Heart left ventricle (tissue), 16 donors: ENCODE measurements at regions of chrX and their contacts with region 1.

Region 1: GRCh38 chrX:119516157-119516702 is 48.0 kb downstream of the SLC25A5 start:
- DNase-seq: peak in 2 of 5 donors; percentile 16 to 18
- ATAC-seq: peak in 3 of 4 donors; percentile 66 to 76 (median 73)
- H3K4me3 ChIP-seq: no peak overlapping the region
- H3K27ac ChIP-seq: no peak overlapping the region
- H3K4me1 ChIP-seq: peaks cover 0 to 5% (median 0%) of the 10 kb centered on the region in 12 donors
- H3K27me3 ChIP-seq: no peaks in the 10 kb centered on the region
- CTCF ChIP-seq: peak; percentile 58 to 73 (median 66)
- POLR2A ChIP-seq: no peak

Region 2: GRCh38 chrX:118839334-118839958 is 676.8 kb before region 1 on chrX:
- intact Hi-C with region 1: no loop called
- DNase-seq: peak; percentile 77 to 90 (median 84)
- ATAC-seq: peak; percentile 87 to 96 (median 95)
- H3K4me3 ChIP-seq: peak overlapping the region in 11 of 12 donors; percentile 16 to 74 (median 56)
- H3K27ac ChIP-seq: peak overlapping the region in 2 of 12 donors; percentile 4 to 29
- H3K4me1 ChIP-seq: peaks cover 0 to 7% (median 0%) of the 10 kb centered on the region in 12 donors
- H3K27me3 ChIP-seq: peaks cover 0 to 16% (median 0%) of the 10 kb centered on the region in 9 donors
- CTCF ChIP-seq: peak; percentile 60 to 87 (median 74)
- POLR2A ChIP-seq: no peak

Region 3: GRCh38 chrX:119410027-119410823 is 106.0 kb before region 1 on chrX:
- intact Hi-C with region 1: loop called in 4 of 10 experiments (anchors 5 to 10 kb)
- DNase-seq: peak in 1 of 5 donors; percentile 16
- ATAC-seq: no peak
- H3K4me3 ChIP-seq: no peak overlapping the region
- H3K27ac ChIP-seq: no peak overlapping the region
- H3K4me1 ChIP-seq: no peaks in the 10 kb centered on the region
- H3K27me3 ChIP-seq: peaks cover 0 to 3% (median 0%) of the 10 kb centered on the region in 9 donors
- CTCF ChIP-seq: no peak
- POLR2A ChIP-seq: no peak

Region 4: DNA sequence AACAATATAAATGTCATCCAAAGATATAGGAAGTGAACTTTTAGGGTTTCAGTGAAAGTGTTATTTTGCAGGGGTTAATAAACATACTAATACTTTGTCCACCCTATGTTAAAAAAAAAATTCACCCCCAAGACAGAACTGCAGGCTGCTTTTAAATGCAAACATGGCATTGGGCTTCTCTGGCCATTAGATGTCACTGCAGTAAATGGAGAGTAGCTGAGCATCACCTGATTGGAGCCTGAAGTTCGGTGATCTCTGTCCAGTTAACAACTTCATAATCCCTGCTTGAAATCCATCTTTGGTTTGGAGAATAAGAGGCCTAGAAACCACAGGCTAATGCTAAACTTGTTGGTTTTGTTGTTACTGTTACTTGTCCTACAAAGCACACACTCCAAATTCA is 98.4 kb before region 1 on chrX:
- intact Hi-C with region 1: loop called in 6 of 10 experiments (anchors 2 to 10 kb)
- DNase-seq: no peak
- ATAC-seq: no peak
- H3K4me3 ChIP-seq: no peak overlapping the region
- H3K27ac ChIP-seq: no peak overlapping the region
- H3K4me1 ChIP-seq: no peaks in the 10 kb centered on the region
- H3K27me3 ChIP-seq: no peaks in the 10 kb centered on the region
- CTCF ChIP-seq: peak in 7 of 12 donors; percentile 7 to 33 (median 20)
- POLR2A ChIP-seq: no peak

Region 5: GRCh38 chrX:119468930-119469635 is 47.1 kb before region 1 on chrX:
- intact Hi-C with region 1: loop called in 1 of 10 experiments (anchors 1 kb)
- DNase-seq: peak; percentile 87 to 93 (median 89)
- ATAC-seq: peak; percentile 77 to 89 (median 87)
- H3K4me3 ChIP-seq: peak overlapping the region; percentile 73 to 100 (median 85)
- H3K27ac ChIP-seq: peak overlapping the region; percentile 91 to 99 (median 97)
- H3K4me1 ChIP-seq: peaks cover 0 to 16% (median 0%) of the 10 kb centered on the region in 12 donors
- H3K27me3 ChIP-seq: no peaks in the 10 kb centered on the region
- CTCF ChIP-seq: peak; percentile 56 to 88 (median 74)
- POLR2A ChIP-seq: peak in 1 of 2 donors; percentile 52

Region 6: DNA sequence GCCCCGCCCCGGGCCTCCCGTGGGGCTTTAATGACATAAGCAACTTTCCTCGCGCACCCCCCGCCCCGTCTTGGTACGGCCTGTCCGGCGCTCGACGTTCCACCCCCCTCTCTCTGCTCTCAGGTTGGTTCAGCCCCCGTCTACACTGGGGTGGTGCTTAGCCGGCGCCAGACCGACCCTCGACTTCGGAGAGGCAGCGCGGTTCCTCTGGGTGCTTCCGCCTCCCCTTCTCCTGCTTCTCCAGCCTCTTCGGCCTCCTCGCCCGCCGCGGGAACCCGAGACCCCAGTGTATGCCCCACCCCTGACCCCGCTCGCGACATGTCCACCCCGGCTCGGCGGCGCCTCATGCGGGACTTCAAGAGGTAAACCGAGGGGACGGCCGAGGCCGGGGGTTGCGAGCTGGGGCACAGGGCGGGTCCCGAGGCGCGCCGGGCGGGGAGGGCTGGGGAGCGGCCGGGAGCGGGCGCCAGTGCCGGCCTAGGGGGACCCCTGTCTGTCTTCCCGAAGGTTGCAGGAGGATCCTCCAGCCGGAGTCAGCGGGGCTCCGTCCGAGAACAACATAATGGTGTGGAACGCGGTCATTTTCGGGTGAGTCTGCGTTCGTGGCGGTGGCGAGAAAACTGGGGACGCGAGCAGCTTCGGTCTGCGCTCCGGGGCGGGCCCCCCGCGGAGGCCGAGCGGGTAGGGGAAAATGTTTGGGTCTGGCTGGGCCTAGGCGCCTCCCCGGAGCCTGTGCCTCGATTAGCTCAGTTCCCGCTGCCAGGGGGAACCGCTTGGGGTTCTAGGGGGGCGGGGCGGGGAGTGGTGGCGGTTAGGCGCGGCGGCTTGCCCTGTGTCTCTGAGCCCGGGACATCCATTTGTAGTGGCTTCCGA is 58.4 kb after region 1 on chrX and contains the start of gene UBE2A:
- intact Hi-C with region 1: loop called in 1 of 10 experiments (anchors 10 kb)
- DNase-seq: peak; percentile 92 to 95 (median 92)
- ATAC-seq: peak; percentile 94 to 98 (median 96)
- H3K4me3 ChIP-seq: peak within 1 kb of the TSS; percentile 39 to 88 (median 79)
- H3K27ac ChIP-seq: peak within 1 kb of the TSS; percentile 89 to 96 (median 93)
- H3K4me1 ChIP-seq: peaks cover 0 to 22% (median 8%) of the 10 kb centered on the region in 12 donors
- H3K27me3 ChIP-seq: peaks cover 0 to 7% (median 0%) of the 10 kb centered on the region in 9 donors
- CTCF ChIP-seq: peak; percentile 15 to 61 (median 40)
- POLR2A ChIP-seq: peak; percentile 2 to 82
- total RNA-seq, gene UBE2A: 37.3 to 72.4 (median 65.5) TPM

Region 7: DNA sequence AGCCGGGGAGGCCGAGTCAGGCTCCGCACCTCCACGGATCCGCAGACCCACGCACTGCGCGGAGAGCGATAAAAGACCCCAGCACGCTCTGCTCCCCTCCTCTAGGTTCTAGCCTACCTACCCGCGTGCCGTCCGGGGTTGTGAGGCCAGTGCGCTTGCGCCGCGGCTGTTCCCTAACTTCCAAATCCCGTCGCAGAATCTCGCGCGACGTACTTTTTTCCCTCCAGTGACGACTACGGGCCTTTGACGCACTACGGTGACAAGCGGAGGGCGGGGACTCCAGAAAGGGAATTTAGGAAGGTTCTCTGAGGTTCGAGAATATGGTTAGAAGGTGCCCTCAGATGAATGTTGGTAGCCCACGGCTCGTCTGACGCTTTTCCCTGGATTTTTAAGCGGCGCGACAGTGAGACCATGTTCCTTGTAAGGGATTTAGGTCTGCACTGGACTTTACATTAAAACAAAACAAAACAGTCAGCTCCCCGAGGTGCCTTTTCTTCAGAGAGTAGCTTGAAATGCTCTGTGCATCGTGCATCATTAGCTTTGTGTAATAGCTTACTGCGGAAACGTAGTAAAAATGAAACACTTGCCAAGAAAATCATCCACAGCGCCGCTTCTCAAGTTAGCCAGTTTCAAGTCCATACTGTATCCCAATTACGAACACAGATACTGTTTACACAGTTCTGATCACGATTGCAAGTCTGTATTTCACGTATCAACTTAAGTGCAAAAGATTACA is 90.2 kb after region 1 on chrX and contains the start of gene NKRF:
- intact Hi-C with region 1: loop called in 2 of 10 experiments (anchors 5 to 10 kb)
- DNase-seq: peak; percentile 91 to 96 (median 93)
- ATAC-seq: peak; percentile 86 to 96 (median 94)
- H3K4me3 ChIP-seq: peak within 1 kb of the TSS; percentile 55 to 98 (median 76)
- H3K27ac ChIP-seq: peak within 1 kb of the TSS; percentile 65 to 97 (median 88)
- H3K4me1 ChIP-seq: peaks cover 0 to 7% (median 0%) of the 10 kb centered on the region in 12 donors
- H3K27me3 ChIP-seq: peaks cover 0 to 9% (median 0%) of the 10 kb centered on the region in 9 donors
- CTCF ChIP-seq: no peak
- POLR2A ChIP-seq: peak in 1 of 2 donors; percentile 80
- total RNA-seq, gene NKRF: 3.9 to 6.0 (median 4.8) TPM

Region 8: GRCh38 chrX:119729408-119730201 is 213.4 kb after region 1 on chrX:
- intact Hi-C with region 1: loop called in 9 of 10 experiments (anchors 2 to 10 kb)
- DNase-seq: peak in 4 of 5 donors; percentile 39 to 59 (median 42)
- ATAC-seq: peak in 3 of 4 donors; percentile 30 to 58 (median 49)
- H3K4me3 ChIP-seq: no peak overlapping the region
- H3K27ac ChIP-seq: no peak overlapping the region
- H3K4me1 ChIP-seq: peaks cover 0 to 8% (median 0%) of the 10 kb centered on the region in 12 donors
- H3K27me3 ChIP-seq: no peaks in the 10 kb centered on the region
- CTCF ChIP-seq: peak; percentile 41 to 69 (median 58)
- POLR2A ChIP-seq: no peak

Region 9: DNA sequence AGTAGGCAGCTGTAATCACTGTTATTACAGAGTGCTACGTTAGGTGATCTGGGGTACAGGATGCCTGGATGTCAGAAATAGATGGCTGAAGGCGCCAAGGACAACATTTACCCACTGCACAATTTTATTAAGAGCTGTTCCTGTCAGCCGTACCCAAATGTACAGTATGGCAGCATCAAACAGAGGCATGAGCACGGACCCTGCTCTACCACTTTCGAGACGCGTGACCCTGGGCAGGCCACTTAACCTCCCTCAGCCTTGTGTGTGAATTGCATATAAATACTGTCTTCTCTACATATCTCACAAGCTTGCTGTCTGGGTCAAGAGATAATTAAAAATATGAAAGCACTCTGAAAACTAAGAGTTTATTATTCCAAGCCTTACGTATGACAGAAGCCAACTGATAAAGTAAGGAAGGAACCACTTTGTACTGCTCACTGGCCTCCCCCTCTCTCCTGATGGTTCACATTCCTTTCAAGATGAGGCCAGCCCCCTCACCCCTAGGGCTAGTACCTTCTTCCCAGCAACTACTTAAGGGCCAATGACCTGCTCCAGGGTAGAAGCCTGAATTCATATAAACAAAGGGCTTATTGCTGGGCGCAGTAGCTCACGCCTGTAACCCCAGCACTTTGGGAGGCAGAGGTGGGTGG is 236.6 kb after region 1 on chrX:
- intact Hi-C with region 1: no loop called
- DNase-seq: no peak
- ATAC-seq: no peak
- H3K4me3 ChIP-seq: no peak overlapping the region
- H3K27ac ChIP-seq: no peak overlapping the region
- H3K4me1 ChIP-seq: peaks cover 0 to 37% (median 0%) of the 10 kb centered on the region in 12 donors
- H3K27me3 ChIP-seq: no peaks in the 10 kb centered on the region
- CTCF ChIP-seq: no peak
- POLR2A ChIP-seq: no peak